Gastrocnemius medialis (tissue), 4 donors: ENCODE measurements at regions of chr11 and their contacts with region 1.

Region 1: GRCh38 chr11:47426061-47426956 is at the start of gene PSMC3:
- DNase-seq: peak; percentile 97 to 98
- ATAC-seq: peak; percentile 89 to 91
- H3K4me3 ChIP-seq: peak within 1 kb of the TSS; percentile 73 to 99 (median 84)
- H3K27ac ChIP-seq: peak within 1 kb of the TSS; percentile 91 to 96 (median 94)
- H3K4me1 ChIP-seq: peaks cover 15 to 25% of the 10 kb centered on the region in 2 donors
- H3K27me3 ChIP-seq: no peaks in the 10 kb centered on the region
- CTCF ChIP-seq: no peak
- POLR2A ChIP-seq: peak; percentile 89 to 90
- total RNA-seq, gene PSMC3: 243 to 350 (median 329) TPM

Region 2: GRCh38 chr11:45859661-45860140 is 1566.6 kb before region 1 on chr11:
- in situ Hi-C with region 1: no loop called
- intact Hi-C with region 1: loop called (anchors 10 kb)
- DNase-seq: peak; percentile 91 to 96
- ATAC-seq: peak; percentile 70 to 74
- H3K4me3 ChIP-seq: peak overlapping the region in 1 of 4 donors; percentile 19
- H3K27ac ChIP-seq: peak overlapping the region; percentile 91 to 99 (median 99)
- H3K4me1 ChIP-seq: peaks cover 67 to 69% of the 10 kb centered on the region in 2 donors
- H3K27me3 ChIP-seq: no peaks in the 10 kb centered on the region
- CTCF ChIP-seq: no peak
- POLR2A ChIP-seq: peak; percentile 55 to 59

Region 3: GRCh38 chr11:46367244-46367915 is 1058.9 kb before region 1 on chr11:
- in situ Hi-C with region 1: no loop called
- intact Hi-C with region 1: loop called (anchors 10 kb)
- DNase-seq: peak in 1 of 2 donors; percentile 66
- ATAC-seq: peak in 1 of 2 donors; percentile 18
- H3K4me3 ChIP-seq: no peak overlapping the region
- H3K27ac ChIP-seq: peak overlapping the region; percentile 98 to 100 (median 98)
- H3K4me1 ChIP-seq: peaks cover 49 to 55% of the 10 kb centered on the region in 2 donors
- H3K27me3 ChIP-seq: no peaks in the 10 kb centered on the region
- CTCF ChIP-seq: peak; percentile 92 to 98 (median 96)
- POLR2A ChIP-seq: no peak

Region 4: DNA sequence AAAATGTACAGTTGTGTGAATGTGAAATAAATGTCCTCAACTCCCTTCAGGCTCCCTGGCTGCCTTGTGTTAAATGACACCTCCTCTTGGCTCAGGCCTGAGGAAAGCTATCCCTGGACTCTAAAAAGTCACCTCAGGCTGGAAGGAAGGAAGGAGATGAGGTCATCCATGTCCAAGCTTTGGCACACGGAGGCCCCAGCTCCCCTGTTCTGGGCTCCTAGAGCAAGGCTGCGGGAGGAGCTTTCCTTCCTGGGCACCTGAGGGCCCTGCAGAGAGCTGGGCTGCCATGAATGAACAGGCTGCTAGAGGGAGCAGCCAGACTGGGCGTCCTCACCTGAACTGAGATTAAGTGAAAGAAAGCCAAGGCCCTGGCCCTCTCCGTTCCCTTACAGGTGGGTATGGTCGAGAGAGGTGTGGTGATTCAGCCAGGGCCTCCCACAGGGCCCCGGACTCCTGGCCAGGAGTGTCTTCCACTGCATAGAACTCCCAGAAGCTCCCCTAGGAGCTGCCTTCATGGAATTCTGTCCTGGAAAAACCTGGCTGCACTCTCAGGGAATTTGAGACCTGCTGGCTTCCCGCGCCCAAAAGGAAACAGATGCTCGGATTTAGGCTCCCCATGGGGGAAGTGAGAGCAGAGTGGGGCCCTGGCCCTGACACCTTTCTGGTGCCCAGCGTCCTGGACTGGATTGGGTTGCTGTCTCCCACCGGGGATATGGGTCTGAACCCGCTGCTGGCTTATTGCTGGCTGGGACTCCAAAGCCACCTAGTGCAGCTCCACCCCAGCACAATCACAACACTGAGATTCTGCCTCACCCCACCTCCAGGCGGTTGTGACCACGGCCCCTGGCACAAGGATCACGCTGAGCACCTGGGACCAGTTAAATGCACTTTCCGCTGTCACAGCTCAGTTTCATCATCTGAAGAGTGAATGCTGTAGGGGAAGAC is 96.0 kb before region 1 on chr11:
- in situ Hi-C with region 1: no loop called
- intact Hi-C with region 1: no loop called
- DNase-seq: peak; percentile 43 to 78
- ATAC-seq: peak; percentile 93 to 94
- H3K4me3 ChIP-seq: no peak overlapping the region
- H3K27ac ChIP-seq: peak overlapping the region; percentile 67 to 82 (median 72)
- H3K4me1 ChIP-seq: peaks cover 30 to 34% of the 10 kb centered on the region in 2 donors
- H3K27me3 ChIP-seq: no peaks in the 10 kb centered on the region
- CTCF ChIP-seq: peak in 3 of 5 experiments; percentile 9 to 16 (median 13)
- POLR2A ChIP-seq: no peak

Region 5: DNA sequence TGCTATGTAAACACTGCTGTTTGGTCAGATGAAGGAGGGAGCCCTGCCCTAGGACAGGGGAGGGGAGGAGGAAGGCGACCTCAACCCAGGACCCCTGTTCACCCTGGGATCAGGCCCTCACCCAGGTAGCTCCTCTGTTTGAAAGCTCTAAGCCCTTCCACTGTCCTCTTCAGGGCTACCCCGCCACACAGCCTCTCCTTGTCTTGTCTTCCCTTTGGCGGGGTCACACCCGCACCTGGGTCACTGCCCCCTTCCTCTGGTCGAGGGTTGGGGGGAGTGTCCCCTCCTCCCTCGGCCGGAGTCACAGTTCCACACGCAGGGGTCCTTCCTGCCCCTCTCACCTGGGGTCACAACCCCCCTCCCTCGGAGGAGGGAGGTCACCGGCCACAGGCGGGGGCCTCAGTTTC is 138.6 kb after region 1 on chr11:
- in situ Hi-C with region 1: no loop called
- intact Hi-C with region 1: no loop called
- DNase-seq: no peak
- ATAC-seq: peak; percentile 7 to 24
- H3K4me3 ChIP-seq: peak overlapping the region; percentile 80 to 97 (median 84)
- H3K27ac ChIP-seq: peak overlapping the region; percentile 81 to 89 (median 86)
- H3K4me1 ChIP-seq: peaks cover 16 to 25% of the 10 kb centered on the region in 2 donors
- H3K27me3 ChIP-seq: no peaks in the 10 kb centered on the region
- CTCF ChIP-seq: no peak
- POLR2A ChIP-seq: no peak

Region 6: GRCh38 chr11:47578524-47579460 is 152.5 kb after region 1 on chr11 and contains the starts of genes KBTBD4 and NDUFS3:
- in situ Hi-C with region 1: no loop called
- intact Hi-C with region 1: no loop called
- DNase-seq: peak; percentile 83 to 84
- ATAC-seq: peak; percentile 96 to 98
- H3K4me3 ChIP-seq: peak within 1 kb of the TSS; percentile 79 to 98 (median 82)
- H3K27ac ChIP-seq: peak within 1 kb of the TSS; percentile 89 to 94 (median 91)
- H3K4me1 ChIP-seq: peaks cover 28 to 33% of the 10 kb centered on the region in 2 donors
- H3K27me3 ChIP-seq: no peaks in the 10 kb centered on the region
- CTCF ChIP-seq: no peak
- POLR2A ChIP-seq: peak; percentile 52 to 53
- total RNA-seq, gene KBTBD4: 25.0 to 35.6 (median 30.4) TPM
- total RNA-seq, gene NDUFS3: 143 to 240 (median 194) TPM